GM10248 (cell line): ENCODE measurements at regions of chr18 and their contacts with region 1.

Region 1: GRCh38 chr18:11826836-11827235 is 24.4 kb upstream of the CHMP1B start:
- DNase-seq: no peak
- CTCF ChIP-seq: no peak

Region 2: GRCh38 chr18:11908182-11909060 is 81.6 kb after region 1 on chr18 and contains the start of gene MPPE1:
- CTCF ChIA-PET with region 1: no interaction called
- POLR2A ChIA-PET with region 1: interaction called, 10 read pairs
- DNase-seq: peak; percentile 94
- CTCF ChIP-seq: no peak